H1 (cell line): ENCODE measurements at regions of chr11 and their contacts with region 1.

Region 1: DNA sequence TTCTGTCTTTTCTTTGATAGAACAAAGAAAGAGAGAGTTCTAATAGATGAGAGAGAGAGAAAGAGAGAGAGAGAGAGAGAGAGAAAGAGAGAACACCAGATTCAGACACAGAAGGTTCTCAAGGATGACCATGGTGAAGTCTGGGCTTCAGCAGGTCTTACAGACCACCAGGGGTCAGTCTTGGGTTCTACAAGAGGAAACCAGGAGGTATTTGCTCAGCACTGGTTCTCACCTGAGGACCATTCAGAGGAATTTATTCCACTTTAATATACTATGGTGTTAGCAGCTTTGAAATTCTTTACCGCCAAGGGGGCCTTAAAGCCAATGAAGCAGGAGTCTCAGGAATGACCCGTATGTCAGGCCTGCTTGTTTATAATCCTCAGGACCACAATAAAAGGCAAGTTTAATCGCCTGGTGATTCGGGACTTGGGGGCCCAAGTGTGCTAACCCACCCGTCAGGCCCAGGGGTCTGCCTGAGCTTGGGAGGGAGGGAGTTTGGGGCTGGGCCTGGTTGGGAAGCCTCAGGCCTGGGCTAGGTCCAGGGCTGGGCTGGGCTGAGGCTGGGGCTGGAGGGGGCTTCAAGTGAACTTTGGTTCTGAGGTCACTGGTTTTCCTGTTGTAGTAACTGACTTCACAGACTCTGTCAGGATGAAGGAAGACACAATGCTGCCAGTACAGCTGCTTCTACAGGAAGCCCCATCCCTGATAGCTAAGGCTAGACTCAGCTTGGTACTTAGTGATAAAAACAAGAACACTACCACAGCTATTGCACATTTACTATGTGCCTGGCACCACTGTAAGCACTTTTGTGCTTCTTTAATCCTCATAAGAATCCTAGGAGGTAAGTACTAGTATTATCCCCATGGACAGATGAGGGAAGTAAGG is 179.2 kb upstream of the ZBED5 start:
- DNase-seq: peak in 1 of 2 experiments; percentile 9
- H3K4me3 ChIP-seq: no peak overlapping the region
- H3K27ac ChIP-seq: no peak overlapping the region
- H3K4me1 ChIP-seq: peaks cover 0 to 3% (median 1%) of the 10 kb centered on the region in 4 experiments; a peak in 3 of 7 replicates
- H3K27me3 ChIP-seq: no peaks in the 10 kb centered on the region
- CTCF ChIP-seq: peak; percentile 49 to 85 (median 74)
- EP300 ChIP-seq: no peak
- POLR2A ChIP-seq: no peak
- RAD21 ChIP-seq: peak; percentile 90 to 92

Region 2: GRCh38 chr11:11069841-11070835 is 33.0 kb after region 1 on chr11:
- CTCF ChIA-PET with region 1: interaction called, 29 read pairs
- POLR2A ChIA-PET with region 1: no interaction called
- DNase-seq: no peak
- H3K4me3 ChIP-seq: no peak overlapping the region
- H3K27ac ChIP-seq: no peak overlapping the region
- H3K4me1 ChIP-seq: peaks cover 1 to 11% (median 8%) of the 10 kb centered on the region in 4 experiments
- H3K27me3 ChIP-seq: 0 out of 7 replicates have a peak, but pooled peaks cover 0 to 4% (median 0%) of the 10 kb centered on the region in 4 experiments
- CTCF ChIP-seq: no peak
- EP300 ChIP-seq: no peak
- POLR2A ChIP-seq: no peak
- RAD21 ChIP-seq: no peak

Region 3: GRCh38 chr11:11148104-11148509 is 111.0 kb after region 1 on chr11:
- CTCF ChIA-PET with region 1: interaction called, 68 read pairs
- POLR2A ChIA-PET with region 1: no interaction called
- DNase-seq: peak; percentile 60 to 73
- H3K4me3 ChIP-seq: no peak overlapping the region
- H3K27ac ChIP-seq: no peak overlapping the region
- H3K4me1 ChIP-seq: no peaks in the 10 kb centered on the region; a peak in 1 of 7 replicates
- H3K27me3 ChIP-seq: no peaks in the 10 kb centered on the region; a peak in 1 of 7 replicates
- CTCF ChIP-seq: peak; percentile 56 to 71 (median 63)
- EP300 ChIP-seq: no peak
- POLR2A ChIP-seq: no peak
- RAD21 ChIP-seq: peak; percentile 25 to 39; a peak in 2 of 4 replicates

Region 4: DNA sequence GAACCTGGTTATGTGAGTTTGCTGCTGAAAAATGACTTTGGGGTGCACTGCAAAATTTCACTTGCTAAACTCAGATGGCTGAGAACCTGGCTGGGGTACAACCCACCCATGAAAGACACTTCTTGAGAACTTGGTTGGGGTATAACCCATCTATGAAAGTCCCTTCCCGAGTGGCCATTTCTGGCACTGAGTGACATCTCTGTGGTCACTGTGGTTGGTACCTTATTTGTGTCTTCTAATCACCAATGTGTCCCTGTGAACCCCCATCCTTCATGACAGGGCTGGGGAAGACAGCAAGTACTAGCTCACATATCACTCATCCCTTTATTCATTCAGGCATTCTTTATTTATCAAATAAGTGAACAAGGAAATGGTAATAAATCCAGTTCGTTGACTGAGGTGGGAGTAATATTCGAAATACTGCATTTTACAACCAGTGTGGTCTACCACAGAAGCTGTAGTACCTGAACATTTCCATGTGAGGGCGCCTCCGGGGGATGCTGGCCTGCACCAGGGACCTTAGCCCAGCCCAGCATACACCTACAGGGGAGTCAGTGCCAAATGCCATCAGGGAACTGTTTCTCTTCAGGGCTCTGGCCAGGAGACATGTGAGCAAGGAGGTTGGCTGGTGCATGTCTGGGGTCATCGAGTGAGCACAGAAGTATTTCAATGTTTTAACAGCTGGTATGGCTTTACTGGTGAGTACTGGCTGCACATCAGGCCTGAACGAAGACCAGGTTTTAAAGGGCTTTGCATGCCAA is 193.9 kb after region 1 on chr11:
- CTCF ChIA-PET with region 1: interaction called, 19 read pairs
- POLR2A ChIA-PET with region 1: no interaction called
- DNase-seq: peak in 1 of 2 experiments; percentile 79
- H3K4me3 ChIP-seq: no peak overlapping the region
- H3K27ac ChIP-seq: no peak overlapping the region
- H3K4me1 ChIP-seq: no peaks in the 10 kb centered on the region
- H3K27me3 ChIP-seq: peaks cover 0 to 4% (median 0%) of the 10 kb centered on the region in 4 experiments; a peak in 2 of 7 replicates
- CTCF ChIP-seq: peak; percentile 86 to 87 (median 86)
- EP300 ChIP-seq: no peak
- POLR2A ChIP-seq: no peak
- RAD21 ChIP-seq: peak; percentile 76 to 86

Region 5: DNA sequence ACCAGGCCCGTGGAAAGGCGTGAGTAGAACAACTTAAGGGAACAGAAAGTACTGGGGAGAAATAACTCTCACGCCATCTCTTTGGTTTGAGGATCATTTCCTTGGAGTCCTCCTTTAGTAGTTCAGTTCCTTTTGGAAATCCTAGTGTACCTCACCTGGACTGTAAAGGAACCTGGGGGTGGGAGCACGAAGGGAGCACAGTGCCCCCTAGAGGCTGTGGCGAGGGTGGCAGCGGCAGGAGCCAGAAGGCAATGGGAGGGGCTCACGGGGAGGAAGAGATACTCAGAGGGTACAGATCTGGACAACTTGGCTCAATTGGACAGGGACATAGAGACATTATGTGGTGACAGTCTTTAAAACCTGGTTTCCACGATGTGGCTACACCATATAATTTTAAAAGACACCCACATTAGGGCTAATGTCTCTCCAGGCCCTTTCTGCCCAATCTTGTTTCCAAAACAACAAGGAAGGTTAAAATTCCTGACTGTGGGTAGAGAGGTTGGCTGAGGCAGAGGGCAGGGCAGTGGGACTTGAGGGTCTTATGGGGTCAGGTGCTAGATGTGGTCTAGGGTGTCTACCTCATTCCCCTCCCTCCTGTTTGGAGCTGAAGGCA is 229.0 kb after region 1 on chr11:
- CTCF ChIA-PET with region 1: interaction called, 18 read pairs
- POLR2A ChIA-PET with region 1: no interaction called
- DNase-seq: peak in 1 of 2 experiments; percentile 94
- H3K4me3 ChIP-seq: no peak overlapping the region
- H3K27ac ChIP-seq: no peak overlapping the region
- H3K4me1 ChIP-seq: peaks cover 0 to 7% (median under 1%) of the 10 kb centered on the region in 4 experiments; a peak in 3 of 7 replicates
- H3K27me3 ChIP-seq: no peaks in the 10 kb centered on the region
- CTCF ChIP-seq: peak; percentile 90 to 98 (median 95)
- EP300 ChIP-seq: no peak
- POLR2A ChIP-seq: no peak
- RAD21 ChIP-seq: peak; percentile 86 to 92